GM10248 (cell line): ENCODE measurements at regions of chr21 and their contacts with region 1.

Region 1: DNA sequence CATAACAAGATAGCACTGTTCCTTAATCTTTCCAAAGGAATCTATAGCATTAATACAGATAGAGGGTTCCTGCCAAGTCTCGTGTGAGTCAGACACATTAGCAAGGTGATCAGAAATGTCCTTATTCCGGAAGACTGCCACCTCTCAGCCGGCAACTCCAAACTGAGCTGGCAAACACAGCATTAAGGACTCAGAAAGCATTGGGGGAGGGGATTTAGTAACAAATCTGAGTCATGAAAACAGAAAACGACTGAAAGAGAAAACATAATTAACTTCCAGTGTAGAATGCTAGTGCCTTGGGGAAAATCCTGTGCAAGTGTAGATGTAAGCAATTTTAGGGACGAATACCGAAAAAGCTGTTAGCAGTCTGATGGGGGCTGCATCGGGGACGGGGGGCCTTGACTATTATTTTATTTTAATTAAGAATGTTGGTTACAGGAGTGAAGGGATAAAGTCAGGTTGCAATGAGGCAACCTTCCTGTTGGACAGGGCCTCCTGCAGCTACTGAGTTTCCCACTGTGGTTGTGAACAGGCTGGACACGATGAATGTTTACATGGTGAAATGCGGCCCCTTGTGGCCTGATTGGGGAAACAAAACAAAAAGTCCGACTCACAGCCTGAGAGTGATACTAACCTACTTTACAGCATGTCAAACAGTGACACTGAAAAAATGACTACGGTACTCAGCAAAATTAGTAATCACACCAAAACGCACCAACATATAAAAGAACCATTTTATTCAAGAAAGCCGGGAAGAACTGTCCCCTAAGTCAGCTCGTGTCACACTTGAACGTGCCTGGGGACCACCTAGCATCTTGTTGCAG is 20.7 kb downstream of the MIS18A start:
- DNase-seq: peak; percentile 74
- CTCF ChIP-seq: peak; percentile 74

Region 2: GRCh38 chr21:31750843-31751242 is 507.3 kb before region 1 on chr21:
- CTCF ChIA-PET with region 1: no interaction called
- POLR2A ChIA-PET with region 1: no interaction called
- DNase-seq: no peak
- CTCF ChIP-seq: no peak

Region 3: DNA sequence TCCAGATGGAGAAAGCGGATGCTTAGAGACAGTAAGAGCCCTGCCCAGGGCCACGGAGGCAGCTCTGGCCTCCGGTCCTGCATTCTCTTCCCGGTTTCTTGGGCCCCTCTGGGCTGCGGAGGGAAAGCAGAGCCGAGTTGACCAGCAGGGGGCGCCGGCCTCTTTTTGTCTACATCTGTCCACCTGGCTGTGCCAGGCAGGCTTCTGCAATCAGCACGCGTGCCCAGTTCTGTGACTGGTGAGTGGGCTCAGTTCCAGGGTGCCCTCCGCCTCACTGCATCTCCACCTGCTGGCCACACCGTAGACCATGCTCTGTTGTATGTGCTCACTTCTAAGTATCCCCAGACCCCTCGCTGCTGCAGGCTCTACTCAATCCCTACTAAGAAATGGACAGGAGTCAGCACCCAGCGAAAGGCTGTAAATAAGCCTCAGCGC is 392.1 kb before region 1 on chr21:
- CTCF ChIA-PET with region 1: interaction called, 31 read pairs
- POLR2A ChIA-PET with region 1: no interaction called
- DNase-seq: peak; percentile 70
- CTCF ChIP-seq: peak; percentile 71

Region 4: DNA sequence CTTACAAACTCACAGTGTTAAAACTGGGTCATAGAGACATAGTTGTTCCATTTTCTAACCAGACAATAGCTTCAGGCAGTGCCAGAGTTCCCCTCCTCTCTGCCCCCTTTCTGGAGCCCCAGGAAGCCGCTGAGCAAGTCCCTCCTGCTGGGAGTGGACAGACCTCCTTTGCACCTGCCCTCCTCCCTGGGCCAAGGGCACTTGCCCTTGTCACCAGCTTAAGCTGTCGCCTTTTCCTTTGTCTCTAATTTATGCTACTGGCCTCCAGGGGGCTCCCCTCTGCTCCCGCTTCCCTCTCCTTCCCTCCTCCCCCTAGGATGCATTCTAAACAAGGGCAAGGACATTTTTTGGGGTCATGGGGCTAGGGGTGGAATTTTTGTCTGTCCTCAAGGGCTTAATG is 161.8 kb before region 1 on chr21:
- CTCF ChIA-PET with region 1: interaction called, 10 read pairs
- POLR2A ChIA-PET with region 1: no interaction called
- DNase-seq: peak; percentile 38
- CTCF ChIP-seq: peak; percentile 34

Region 5: GRCh38 chr21:32240851-32241687 is 17.1 kb before region 1 on chr21:
- CTCF ChIA-PET with region 1: no interaction called
- POLR2A ChIA-PET with region 1: no interaction called
- DNase-seq: peak; percentile 38
- CTCF ChIP-seq: no peak

Region 6: GRCh38 chr21:32412162-32413014 is 154.2 kb after region 1 on chr21 and contains the start of gene EVA1C:
- CTCF ChIA-PET with region 1: no interaction called
- POLR2A ChIA-PET with region 1: no interaction called
- DNase-seq: no peak
- CTCF ChIP-seq: no peak